OCI-LY7 (cell line): ENCODE measurements at regions of chr22 and their contacts with region 1.

Region 1: DNA sequence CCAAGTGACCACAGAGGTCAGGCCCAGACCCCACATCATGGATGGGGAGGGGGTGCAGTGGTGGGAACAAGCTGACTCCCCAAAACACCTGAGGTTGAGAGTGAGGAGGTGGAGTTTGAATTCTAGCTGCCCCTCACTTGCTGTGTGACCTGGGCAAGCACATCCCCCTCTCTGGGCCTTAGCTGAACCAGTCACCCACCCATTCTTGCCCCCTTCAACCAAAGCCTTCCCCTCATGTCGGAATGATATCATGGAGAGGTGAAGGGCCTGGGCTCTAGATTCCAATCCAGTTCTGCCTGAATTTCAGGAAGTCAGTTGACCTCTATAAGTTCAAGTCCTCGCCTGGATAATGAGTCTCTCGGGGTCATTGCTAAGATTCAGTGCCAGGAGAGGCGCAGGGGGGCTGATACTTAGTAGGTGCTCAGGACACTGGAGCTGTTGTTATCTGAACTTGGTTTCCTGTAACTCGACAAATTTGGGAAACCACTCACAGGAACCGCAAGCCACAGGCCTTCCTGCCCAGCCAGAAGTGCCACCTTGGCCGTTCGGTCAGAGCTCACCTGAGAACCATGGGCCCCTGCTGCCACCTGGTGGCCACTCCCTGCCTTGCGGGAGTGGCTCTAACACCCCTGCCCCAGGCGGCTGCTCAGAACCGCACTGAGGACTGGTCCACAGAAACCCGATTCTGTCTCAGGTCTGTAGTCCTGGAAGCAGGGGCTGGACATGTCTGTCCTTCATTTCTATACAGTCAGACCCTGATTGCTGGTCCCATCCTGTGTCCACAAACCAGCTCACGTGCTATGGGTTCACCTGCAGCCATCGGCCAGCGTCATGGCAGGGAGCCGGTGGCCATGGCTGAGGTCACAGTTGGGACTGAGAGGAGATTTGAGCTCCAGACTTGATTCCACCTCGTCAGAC is 6.9 kb downstream of the CDC42EP1 start:
- DNase-seq: peak; percentile 85
- H3K4me3 ChIP-seq: no peak overlapping the region
- H3K27ac ChIP-seq: no peak overlapping the region
- H3K4me1 ChIP-seq: peaks cover 4% of the 10 kb centered on the region
- CTCF ChIP-seq: peak; percentile 96

Region 2: DNA sequence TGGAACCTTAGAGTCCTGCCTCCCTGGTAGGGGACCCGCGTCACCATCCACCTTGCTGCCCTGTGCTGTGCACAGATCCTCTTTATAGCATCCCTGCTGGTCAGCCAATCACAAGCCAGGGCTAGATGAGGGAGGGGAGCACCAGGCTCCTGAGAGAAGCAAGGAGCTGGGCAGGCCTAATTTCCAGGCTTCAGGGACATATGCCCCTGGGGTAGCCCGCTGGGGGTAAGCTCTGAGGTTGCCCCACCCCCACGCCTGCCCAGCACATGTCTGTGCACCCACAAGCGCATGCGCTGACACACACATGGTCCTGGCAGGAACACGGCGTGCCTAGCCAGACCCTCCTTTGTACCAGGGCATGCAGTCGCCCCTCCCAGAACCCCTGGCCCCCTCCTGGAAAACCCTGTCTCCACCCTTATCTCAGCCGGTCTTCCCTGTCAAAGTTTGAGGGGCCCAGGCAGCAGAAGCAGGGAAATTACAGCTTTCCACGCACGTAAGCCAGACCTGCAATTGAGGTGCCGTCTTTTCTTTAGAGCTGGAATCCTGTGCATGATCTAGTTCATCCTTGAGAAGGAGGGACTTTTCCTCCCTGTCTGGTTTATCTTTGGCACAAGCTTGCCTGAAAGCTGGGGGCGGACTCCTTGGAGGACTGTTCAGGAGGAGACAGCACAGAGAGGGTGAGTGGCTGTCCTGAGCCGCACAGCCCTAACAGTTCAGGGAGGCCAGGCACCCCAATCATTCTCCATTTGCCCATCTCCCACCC is 356.9 kb before region 1 on chr22:
- CTCF ChIA-PET with region 1: no interaction called
- POLR2A ChIA-PET with region 1: no interaction called
- intact Hi-C with region 1: no loop called
- DNase-seq: no peak
- H3K4me3 ChIP-seq: no peak overlapping the region
- H3K27ac ChIP-seq: no peak overlapping the region
- H3K4me1 ChIP-seq: no peaks in the 10 kb centered on the region
- CTCF ChIP-seq: no peak

Region 3: DNA sequence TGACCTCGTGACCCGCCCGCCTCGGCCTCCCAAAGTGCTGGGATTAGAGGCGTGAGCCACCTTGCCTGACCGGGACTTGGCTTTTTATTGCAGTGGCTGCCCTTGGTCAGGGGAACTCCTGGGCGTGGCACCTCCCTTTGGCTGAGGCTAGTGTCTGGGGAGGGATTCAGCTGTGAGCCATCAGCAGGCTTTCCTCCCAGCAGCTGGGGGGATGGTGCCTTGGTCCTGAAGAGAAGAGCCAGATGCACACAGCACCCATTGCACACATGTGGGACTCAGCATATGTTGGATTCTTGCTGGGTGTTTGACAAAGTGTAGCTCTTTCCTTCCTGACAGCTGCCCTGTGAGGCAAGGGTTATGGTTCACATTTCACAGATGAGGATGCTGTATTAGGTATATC is 276.4 kb before region 1 on chr22:
- CTCF ChIA-PET with region 1: no interaction called
- POLR2A ChIA-PET with region 1: no interaction called
- intact Hi-C with region 1: no loop called
- DNase-seq: no peak
- H3K4me3 ChIP-seq: no peak overlapping the region
- H3K27ac ChIP-seq: no peak overlapping the region
- H3K4me1 ChIP-seq: peaks cover 14% of the 10 kb centered on the region
- CTCF ChIP-seq: no peak

Region 4: GRCh38 chr22:37316875-37317371 is 250.2 kb before region 1 on chr22:
- CTCF ChIA-PET with region 1: no interaction called
- POLR2A ChIA-PET with region 1: no interaction called
- intact Hi-C with region 1: loop called (anchors 2 kb)
- DNase-seq: peak; percentile 84
- H3K4me3 ChIP-seq: no peak overlapping the region
- H3K27ac ChIP-seq: no peak overlapping the region
- H3K4me1 ChIP-seq: peaks cover 10% of the 10 kb centered on the region
- CTCF ChIP-seq: peak; percentile 92

Region 5: DNA sequence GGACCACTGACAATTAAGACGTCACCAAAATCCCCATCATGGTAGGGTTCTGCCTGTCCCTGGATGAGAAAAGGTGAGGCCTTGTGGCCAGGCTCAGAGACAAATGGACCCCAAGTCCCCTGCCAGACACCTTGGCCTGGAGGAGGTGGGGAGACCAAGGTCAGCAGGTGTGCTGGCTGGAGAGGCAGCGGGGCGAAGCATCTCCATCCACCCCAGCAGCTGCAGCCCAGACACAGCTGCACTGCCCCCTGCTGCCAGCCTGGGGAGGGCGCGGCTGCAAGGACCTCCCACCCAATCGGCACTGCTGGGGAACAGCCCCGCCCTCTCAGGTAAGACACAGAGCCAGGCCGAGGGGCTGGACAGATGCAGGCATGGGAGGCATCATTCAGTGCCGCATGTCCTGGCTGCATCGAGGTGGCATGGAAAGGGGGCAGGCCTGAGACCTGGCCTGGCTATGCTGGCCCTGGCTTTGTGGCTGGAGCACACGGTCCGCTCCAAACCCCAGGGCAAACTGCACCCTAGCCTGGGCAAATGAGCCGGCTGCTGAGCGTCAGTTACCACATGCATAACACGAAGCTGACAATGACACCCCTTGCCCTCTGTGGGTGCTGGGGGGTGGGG is 68.8 kb before region 1 on chr22:
- CTCF ChIA-PET with region 1: interaction called, 3 read pairs
- POLR2A ChIA-PET with region 1: no interaction called
- intact Hi-C with region 1: loop called (anchors 2 kb)
- DNase-seq: peak; percentile 88
- H3K4me3 ChIP-seq: no peak overlapping the region
- H3K27ac ChIP-seq: no peak overlapping the region
- H3K4me1 ChIP-seq: peaks cover 24% of the 10 kb centered on the region
- CTCF ChIP-seq: peak; percentile 83

Region 6: DNA sequence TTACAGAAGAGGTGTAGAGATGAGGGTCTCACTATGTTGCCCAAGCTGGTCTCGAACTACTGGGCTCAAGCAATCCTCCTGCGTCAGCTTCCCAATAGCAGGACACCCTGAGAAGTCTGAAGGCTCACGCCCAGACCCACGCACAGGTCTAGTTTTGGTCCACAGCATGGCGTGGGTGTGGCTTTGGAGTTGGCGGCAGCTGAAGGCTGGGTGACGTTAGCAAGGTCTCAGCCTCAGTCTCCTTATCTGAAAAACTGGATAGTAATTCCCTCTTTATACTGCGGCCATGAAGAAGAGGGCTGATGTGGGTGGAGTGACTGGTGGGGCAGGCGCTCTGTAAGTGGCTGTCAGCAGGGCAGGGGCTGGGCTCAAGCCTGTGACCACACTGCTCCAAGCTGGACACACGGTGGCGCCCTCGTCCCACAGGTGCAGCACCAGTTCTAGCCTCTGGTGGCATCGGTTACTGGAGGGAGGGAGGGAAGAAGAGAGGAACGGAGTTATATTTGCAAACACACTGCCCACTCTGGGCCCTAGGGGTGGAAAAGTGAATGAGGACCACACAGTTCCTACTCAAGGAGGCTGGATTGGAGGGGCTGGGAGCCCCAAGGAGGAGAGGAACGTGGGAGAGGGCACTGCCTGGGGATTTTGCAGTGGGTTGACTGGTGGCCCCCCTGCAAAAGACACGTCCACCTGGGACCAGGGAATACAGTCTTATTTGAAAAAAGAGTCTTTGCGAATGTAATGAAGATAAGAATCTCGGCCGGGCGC is 28.4 kb before region 1 on chr22:
- CTCF ChIA-PET with region 1: interaction called, 6 read pairs
- POLR2A ChIA-PET with region 1: interaction called, 5 read pairs
- intact Hi-C with region 1: loop called (anchors 1 kb)
- DNase-seq: peak; percentile 92
- H3K4me3 ChIP-seq: no peak overlapping the region
- H3K27ac ChIP-seq: no peak overlapping the region
- H3K4me1 ChIP-seq: peaks cover 26% of the 10 kb centered on the region
- CTCF ChIP-seq: peak; percentile 97

Region 7: DNA sequence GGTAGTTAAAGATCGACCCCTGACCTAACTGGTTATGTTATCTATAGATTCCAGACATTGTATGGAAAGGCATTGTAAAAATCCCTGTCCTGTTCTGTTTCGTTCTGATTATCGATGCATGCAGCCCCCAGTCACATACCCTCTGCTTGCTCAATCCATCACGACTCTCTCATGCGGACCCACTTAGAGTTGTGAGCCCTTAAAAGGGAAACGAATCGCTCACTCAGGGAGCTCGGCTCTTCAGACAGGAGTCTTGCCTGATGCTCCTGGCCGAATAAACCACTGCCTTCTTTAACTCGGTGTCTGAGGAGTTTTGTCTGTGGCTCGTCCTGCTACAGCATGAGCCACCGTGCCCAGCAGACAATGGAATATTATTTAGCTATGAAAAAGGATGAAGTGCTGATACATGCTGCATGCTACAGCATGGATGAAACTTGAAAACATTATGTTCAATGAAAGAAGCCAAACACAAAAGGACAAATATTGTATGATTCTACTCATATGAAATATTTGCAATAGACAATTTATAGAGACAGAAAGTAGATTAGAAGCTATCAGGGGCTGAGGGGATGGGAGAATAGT is 24.8 kb after region 1 on chr22:
- CTCF ChIA-PET with region 1: interaction called, 21 read pairs
- POLR2A ChIA-PET with region 1: interaction called, 3 read pairs
- intact Hi-C with region 1: no loop called
- DNase-seq: no peak
- H3K4me3 ChIP-seq: peak overlapping the region; percentile 64
- H3K27ac ChIP-seq: peak overlapping the region; percentile 2
- H3K4me1 ChIP-seq: no peaks in the 10 kb centered on the region
- CTCF ChIP-seq: no peak